Spleen (tissue), 13 donors: ENCODE measurements at regions of chr6 and their contacts with region 1.

Region 1: GRCh38 chr6:157019733-157020132 is 242.6 kb downstream of the ARID1B start:
- DNase-seq: no peak
- H3K4me3 ChIP-seq: peak overlapping the region in 1 of 8 donors; percentile 87
- H3K27ac ChIP-seq: peak overlapping the region in 7 of 8 donors; percentile 98 to 100 (median 100)
- H3K4me1 ChIP-seq: peaks cover 35 to 89% (median 54%) of the 10 kb centered on the region in 6 donors
- H3K27me3 ChIP-seq: no peaks in the 10 kb centered on the region
- CTCF ChIP-seq: peak in 4 of 11 experiments; percentile 7 to 21 (median 16)
- POLR2A ChIP-seq: no peak

Region 2: GRCh38 chr6:156376091-156376490 is 643.6 kb before region 1 on chr6:
- intact Hi-C with region 1: no loop called
- DNase-seq: no peak
- H3K4me3 ChIP-seq: no peak overlapping the region
- H3K27ac ChIP-seq: no peak overlapping the region
- H3K4me1 ChIP-seq: no peaks in the 10 kb centered on the region
- H3K27me3 ChIP-seq: no peaks in the 10 kb centered on the region
- CTCF ChIP-seq: no peak
- POLR2A ChIP-seq: no peak

Region 3: DNA sequence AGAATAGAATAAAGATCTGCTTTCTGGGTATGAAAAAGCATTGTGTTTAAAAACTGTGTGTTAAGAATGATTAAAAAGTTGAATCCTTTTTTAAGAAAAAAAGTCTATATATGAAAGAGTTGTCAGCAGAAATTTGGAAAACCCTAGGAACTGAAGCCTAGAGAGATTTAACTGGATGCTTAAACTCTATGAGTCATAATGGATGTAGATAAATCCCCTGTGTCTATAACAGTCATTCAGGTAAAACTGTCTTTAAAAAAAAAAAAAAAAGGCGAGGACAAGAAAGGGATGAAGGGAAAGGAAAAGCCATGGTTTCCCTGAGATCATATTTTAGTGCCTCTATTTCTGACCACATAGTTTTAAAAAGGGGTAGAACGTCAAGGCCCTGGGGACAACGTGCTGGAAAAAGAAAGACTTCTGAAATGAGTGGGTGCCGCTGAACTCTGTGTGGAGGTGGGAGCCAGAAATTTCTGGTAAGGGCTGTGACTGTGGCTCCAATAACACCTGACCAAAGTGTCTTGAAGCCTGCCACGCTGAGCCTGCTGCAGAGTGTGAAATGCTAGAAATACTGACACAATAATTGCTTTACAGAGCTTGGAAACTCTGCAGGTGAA is 545.1 kb before region 1 on chr6:
- intact Hi-C with region 1: no loop called
- DNase-seq: no peak
- H3K4me3 ChIP-seq: no peak overlapping the region
- H3K27ac ChIP-seq: no peak overlapping the region
- H3K4me1 ChIP-seq: no peaks in the 10 kb centered on the region
- H3K27me3 ChIP-seq: no peaks in the 10 kb centered on the region
- CTCF ChIP-seq: no peak
- POLR2A ChIP-seq: no peak

Region 4: GRCh38 chr6:156776840-156777576 is 242.7 kb before region 1 on chr6 and contains the start of gene ARID1B:
- intact Hi-C with region 1: loop called (anchors 5 kb)
- DNase-seq: peak; percentile 97
- H3K4me3 ChIP-seq: peak within 1 kb of the TSS; percentile 65 to 90 (median 72)
- H3K27ac ChIP-seq: peak within 1 kb of the TSS; percentile 95 to 98 (median 98)
- H3K4me1 ChIP-seq: peaks cover 6 to 55% (median 38%) of the 10 kb centered on the region in 6 donors
- H3K27me3 ChIP-seq: no peaks in the 10 kb centered on the region
- CTCF ChIP-seq: no peak
- POLR2A ChIP-seq: peak in 2 of 3 donors; percentile 51 to 73
- total RNA-seq, gene ARID1B: 123 to 223 (median 149) TPM